Right cardiac atrium (tissue), 5 donors: ENCODE measurements at regions of chr10 and their contacts with region 1.

Region 1: GRCh38 chr10:78047314-78047891 is 13.7 kb downstream of the RPS24 start:
- DNase-seq: peak; percentile 89 to 95 (median 92)
- ATAC-seq: peak; percentile 81 to 86
- H3K4me3 ChIP-seq: no peak overlapping the region
- H3K27ac ChIP-seq: no peak overlapping the region
- H3K4me1 ChIP-seq: peaks cover 4% of the 10 kb centered on the region
- H3K27me3 ChIP-seq: no peaks in the 10 kb centered on the region

Region 2: DNA sequence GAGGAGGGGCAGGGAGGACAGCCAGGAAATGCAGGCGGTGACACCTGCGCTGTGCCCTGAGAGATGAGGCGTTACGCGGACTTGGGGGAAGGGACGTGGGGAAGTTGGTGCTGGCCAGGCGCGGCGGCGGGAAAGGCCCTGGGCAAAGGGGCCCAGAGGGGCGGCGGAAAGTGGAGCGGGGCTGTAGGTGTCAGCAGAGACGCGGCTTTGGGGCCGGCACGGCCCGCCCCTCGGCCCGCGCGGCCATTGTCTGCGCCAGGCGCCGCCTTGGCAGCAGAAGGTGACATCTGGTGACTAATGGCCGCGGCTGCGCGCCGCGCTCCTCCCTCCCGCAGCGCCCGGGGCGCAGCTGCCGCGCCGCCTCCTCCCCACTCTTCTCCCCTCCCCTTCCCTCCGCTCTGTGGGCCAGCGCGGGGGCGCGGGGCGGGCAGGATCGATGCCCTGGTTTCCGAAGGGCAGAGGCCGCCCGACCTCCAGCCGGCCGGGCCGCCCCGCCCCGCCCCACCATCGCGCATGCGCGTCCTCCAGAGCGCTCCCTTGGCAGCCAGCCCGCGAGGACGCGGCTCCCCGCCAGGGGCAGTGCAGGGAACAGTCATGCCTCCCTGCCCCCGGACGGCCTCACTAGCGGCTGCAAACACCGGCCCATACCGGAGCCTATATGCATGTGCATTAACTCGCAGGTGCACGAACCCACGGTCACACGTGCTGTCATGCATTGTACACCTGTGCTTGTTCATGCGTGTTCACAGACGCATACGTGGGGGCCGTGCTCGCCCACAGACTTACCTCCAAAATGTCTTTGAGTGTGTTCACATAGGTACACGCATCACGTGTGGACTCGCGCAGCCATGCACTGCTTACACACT is 255.8 kb after region 1 on chr10:
- intact Hi-C with region 1: loop called in 2 of 4 experiments (anchors 10 kb)
- DNase-seq: peak; percentile 95 to 99 (median 98)
- ATAC-seq: peak; percentile 97 to 99
- H3K4me3 ChIP-seq: peak overlapping the region; percentile 51
- H3K27ac ChIP-seq: peak overlapping the region; percentile 82
- H3K4me1 ChIP-seq: no peaks in the 10 kb centered on the region
- H3K27me3 ChIP-seq: no peaks in the 10 kb centered on the region

Region 3: GRCh38 chr10:78657163-78657861 is 609.9 kb after region 1 on chr10:
- intact Hi-C with region 1: loop called in 2 of 4 experiments (anchors 5 to 10 kb)
- DNase-seq: peak; percentile 74 to 90 (median 84)
- ATAC-seq: peak; percentile 84 to 87
- H3K4me3 ChIP-seq: no peak overlapping the region
- H3K27ac ChIP-seq: no peak overlapping the region
- H3K4me1 ChIP-seq: no peaks in the 10 kb centered on the region
- H3K27me3 ChIP-seq: no peaks in the 10 kb centered on the region